ENCODE measurements at regions of chr7 and their contacts with region 1.

Region 1: GRCh38 chr7:13279854-13280435 is 592.5 kb downstream of the ARL4A start:
- DNase-seq: no peak
- ATAC-seq: no peak

Region 2: GRCh38 chr7:12851841-12852240 is 428.1 kb before region 1 on chr7:
- intact Hi-C with region 1: no loop called
- DNase-seq: no peak
- ATAC-seq: no peak

Region 3: DNA sequence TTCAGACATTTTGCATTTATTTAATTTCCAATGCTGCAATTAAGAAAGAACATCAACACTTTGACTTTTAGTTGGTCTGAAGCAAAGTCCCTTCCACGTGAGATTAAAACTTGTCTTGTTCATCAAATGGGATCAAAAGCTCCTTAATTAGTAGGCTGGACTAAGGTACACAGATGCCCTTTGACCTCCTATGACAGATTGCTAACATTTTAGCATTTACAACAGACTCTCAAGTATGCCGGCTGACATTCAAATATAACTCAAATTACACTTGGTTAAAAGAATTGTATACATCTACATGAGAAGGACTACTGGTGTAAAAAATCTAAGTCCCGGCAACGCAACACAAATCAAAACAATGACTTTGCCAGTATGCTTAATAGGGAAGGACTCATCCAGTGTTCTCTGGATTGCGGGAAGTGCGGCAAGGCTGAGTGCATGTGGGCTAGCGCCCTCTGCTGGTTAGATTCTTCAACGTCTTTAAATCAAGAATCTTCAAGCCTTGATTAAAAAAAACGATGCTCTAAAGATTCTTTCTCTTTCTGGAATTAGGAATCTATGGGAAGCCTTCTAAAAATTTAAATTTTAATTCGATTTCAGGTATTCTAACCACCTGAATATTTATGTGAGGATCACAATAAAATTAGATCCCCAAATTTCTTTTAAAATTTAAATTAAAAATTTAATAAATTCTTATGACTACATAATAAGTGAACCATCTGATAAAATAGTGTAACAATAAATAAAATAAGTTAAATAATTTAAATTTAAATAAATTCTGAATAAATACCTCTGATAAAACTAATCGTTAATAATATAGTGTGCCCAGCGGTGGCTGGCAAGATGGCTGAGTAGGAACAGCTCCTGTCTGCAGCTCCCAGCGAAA is 1177.9 kb after region 1 on chr7:
- intact Hi-C with region 1: loop called in 1 of 2 experiments (anchors 10 kb)
- DNase-seq: peak; percentile 38 to 69
- ATAC-seq: peak; percentile 75

Region 4: DNA sequence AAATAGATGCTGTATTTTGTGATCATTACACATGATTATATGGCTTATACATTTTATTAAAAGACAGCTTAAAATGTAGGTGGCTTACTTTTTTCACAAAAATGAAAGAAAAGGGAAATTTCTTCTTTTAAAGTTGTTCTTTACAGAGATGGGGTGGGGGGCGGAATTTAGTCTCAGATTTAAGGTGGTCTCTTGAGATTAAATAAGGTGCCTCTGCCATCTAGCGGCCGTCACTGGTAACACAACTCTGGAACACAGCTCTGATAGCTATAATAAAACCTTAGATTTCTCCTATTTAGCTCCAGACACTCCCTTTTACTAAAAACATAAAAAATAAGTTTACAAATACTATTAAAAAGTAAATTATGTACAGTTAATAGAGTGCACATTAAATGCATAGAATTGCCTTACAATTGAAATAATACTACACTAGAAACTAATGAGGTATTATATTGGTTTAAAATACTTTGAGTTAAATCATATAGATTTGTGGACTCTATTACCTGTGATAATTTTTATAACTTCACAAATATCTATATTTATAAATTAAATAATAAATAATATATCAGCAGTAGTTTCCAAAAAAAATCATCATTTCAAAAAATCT is 1411.8 kb after region 1 on chr7:
- intact Hi-C with region 1: loop called in 1 of 2 experiments (anchors 5 kb)
- DNase-seq: peak in 1 of 2 donors; percentile 55
- ATAC-seq: no peak